ENCODE measurements at regions of chr2 and their contacts with region 1.

Region 1: DNA sequence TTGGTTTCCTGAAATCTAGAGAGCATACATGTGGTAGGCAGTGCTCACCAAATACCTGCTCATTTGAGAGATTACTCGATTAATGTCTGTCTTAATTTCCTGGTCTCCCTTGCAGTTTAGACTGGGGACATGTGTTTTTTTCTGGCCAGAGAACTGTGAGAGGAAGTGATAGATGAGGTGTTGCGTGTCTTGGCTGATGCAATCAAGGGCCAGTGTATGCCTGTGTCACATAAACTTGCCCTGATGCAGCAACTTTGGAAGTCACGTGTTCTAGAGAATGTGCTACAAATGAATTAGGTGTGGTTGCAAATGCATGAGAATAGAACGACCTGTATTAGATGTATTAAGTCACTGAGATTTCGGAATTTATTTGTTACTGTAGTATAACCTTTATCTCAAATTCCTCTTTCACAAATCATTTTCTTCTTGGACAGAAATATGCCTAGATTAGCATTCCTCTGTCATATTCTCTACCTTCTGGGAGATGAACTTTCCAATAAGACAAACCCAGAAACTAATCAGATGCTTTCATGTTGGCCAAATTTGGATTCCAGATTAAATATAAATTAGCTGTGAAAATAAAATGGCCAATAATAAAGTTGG is 9.9 kb upstream of the IL1A start:
- DNase-seq: peak; percentile 59 to 92 (median 73)
- ATAC-seq: peak; percentile 93
- H3K4me3 ChIP-seq: no peak overlapping the region
- H3K27ac ChIP-seq: peak overlapping the region; percentile 81
- H3K4me1 ChIP-seq: peaks cover 3 to 24% of the 10 kb centered on the region in 2 experiments
- H3K27me3 ChIP-seq: no peaks in the 10 kb centered on the region
- CTCF ChIP-seq: no peak
- EP300 ChIP-seq: peak; percentile 94
- POLR2A ChIP-seq: 0 out of 2 replicates have a peak, but pooled peaks have one; percentile 30
- RAD21 ChIP-seq: peak; percentile 27 to 47; a peak in 3 of 4 replicates

Region 2: GRCh38 chr2:112764071-112765044 is 29.9 kb before region 1 on chr2 and contains the start of gene CKAP2L:
- CTCF ChIA-PET with region 1: no interaction called
- POLR2A ChIA-PET with region 1: interaction called, 3 read pairs
- in situ Hi-C with region 1: no loop called
- intact Hi-C with region 1: loop called (anchors 2 kb)
- DNase-seq: peak; percentile 98 to 99 (median 98)
- ATAC-seq: peak; percentile 98
- H3K4me3 ChIP-seq: peak within 1 kb of the TSS; percentile 88
- H3K27ac ChIP-seq: peak within 1 kb of the TSS; percentile 92
- H3K4me1 ChIP-seq: peaks cover 10 to 18% of the 10 kb centered on the region in 2 experiments; a peak in 3 of 5 replicates
- H3K27me3 ChIP-seq: no peaks in the 10 kb centered on the region
- CTCF ChIP-seq: no peak
- EP300 ChIP-seq: no peak
- POLR2A ChIP-seq: peak; percentile 83
- RAD21 ChIP-seq: no peak; a peak in 1 of 4 replicates
- polyA plus RNA-seq, gene CKAP2L: 14.1 to 14.9 TPM

Measured in K562 (cell line).